ENCODE measurements at regions of chr7 and their contacts with region 1.

Region 1: DNA sequence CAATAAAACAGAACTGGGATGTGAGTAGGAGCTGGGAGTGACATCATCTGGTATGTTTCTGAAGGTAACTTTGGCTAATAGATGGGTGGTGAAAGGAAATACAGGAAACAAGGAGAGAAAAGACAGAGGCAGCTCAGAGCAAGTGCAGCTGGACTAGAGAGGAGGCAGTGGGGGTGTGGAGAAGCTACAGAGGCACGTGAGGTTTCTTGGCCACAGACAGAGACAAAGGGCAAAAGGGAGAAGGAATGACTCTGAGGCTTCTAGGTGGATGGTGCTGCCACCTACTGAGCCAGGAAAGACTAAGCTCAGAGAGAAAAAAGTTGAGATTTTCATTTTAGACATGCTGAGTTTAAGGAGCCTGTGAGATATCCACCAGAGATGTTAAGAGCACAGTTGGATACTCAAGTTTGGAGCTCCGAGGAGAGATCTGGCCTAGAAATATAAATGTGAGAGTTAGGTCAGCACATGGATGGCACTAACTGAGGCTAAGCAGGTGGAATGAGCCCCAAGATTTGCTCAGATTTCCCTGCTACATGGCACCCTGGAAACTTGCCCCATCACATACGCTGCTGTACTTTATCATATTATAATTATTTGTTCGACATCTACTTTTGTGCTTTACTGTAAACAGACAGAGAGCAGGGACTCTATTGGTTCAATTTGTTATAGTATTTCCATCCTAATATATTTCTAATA is 293.0 kb upstream of the IMMP2L start:
- DNase-seq: no peak
- ATAC-seq: peak in 3 of 4 donors; percentile 43 to 71 (median 67)
- H3K4me3 ChIP-seq: no peak overlapping the region
- H3K27ac ChIP-seq: no peak overlapping the region
- H3K4me1 ChIP-seq: no peaks in the 10 kb centered on the region
- H3K27me3 ChIP-seq: no peaks in the 10 kb centered on the region
- CTCF ChIP-seq: peak; percentile 18

Region 2: GRCh38 chr7:111741811-111742240 is 113.5 kb before region 1 on chr7:
- intact Hi-C with region 1: loop called in 1 of 2 experiments (anchors 10 kb)
- DNase-seq: no peak
- ATAC-seq: peak; percentile 68 to 83 (median 72)
- H3K4me3 ChIP-seq: no peak overlapping the region
- H3K27ac ChIP-seq: no peak overlapping the region
- H3K4me1 ChIP-seq: no peaks in the 10 kb centered on the region
- H3K27me3 ChIP-seq: no peaks in the 10 kb centered on the region
- CTCF ChIP-seq: peak; percentile 64

Region 3: DNA sequence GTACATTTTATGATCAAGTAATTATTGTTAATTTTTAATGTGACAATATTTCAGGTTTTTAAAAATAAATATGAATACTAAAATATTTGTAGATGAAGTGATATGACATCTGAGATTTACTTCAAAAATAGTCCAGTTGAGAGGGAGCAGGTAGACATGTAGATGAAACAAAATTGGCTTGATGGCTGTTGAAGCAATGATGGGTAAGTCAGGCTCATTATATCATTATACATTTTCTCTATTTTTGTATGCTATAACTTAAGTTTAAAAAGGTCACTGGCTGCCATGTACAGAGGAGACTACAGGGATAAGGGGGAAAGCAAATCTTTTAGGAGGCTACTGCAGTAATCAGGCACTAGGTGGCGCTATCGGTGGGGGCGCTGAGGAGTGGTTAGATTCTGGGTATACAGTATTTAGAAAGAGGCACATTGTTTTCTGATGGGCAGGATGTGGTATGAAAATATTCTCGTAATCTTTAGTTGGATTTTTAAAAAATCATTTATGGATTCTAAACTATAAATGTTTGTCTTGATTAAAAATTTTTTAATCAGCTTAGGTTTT is 103.2 kb before region 1 on chr7:
- intact Hi-C with region 1: loop called (anchors 10 kb)
- DNase-seq: peak; percentile 39 to 58
- ATAC-seq: peak in 1 of 4 donors; percentile 57
- H3K4me3 ChIP-seq: no peak overlapping the region
- H3K27ac ChIP-seq: no peak overlapping the region
- H3K4me1 ChIP-seq: no peaks in the 10 kb centered on the region
- H3K27me3 ChIP-seq: no peaks in the 10 kb centered on the region
- CTCF ChIP-seq: peak; percentile 53

Measured in psoas muscle (tissue), 8 donors.